HAP-1 (cell line): ENCODE measurements at regions of chr1 and their contacts with region 1.

Region 1: DNA sequence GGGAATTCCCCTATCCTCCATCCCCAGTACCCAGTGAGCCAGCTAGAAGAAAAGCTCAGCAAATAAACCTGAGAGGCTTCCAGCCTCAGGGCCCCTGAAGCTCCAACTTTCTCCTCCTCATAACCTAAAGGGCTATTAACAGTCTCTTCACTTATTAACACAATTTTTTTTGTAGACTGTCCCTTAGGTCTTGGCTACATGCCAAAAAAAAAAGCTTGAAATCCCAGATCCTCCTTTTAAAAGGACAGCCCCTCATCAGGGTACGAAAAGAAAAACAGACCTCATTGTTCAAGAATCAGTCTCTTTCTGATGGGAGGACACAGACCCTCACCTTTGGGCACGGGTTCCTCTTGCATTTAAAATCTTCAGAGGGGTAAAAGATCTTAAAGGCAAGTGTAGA is 72.8 kb upstream of the CD1D start:
- DNase-seq: no peak
- H3K4me3 ChIP-seq: no peak overlapping the region
- H3K4me1 ChIP-seq: peaks cover 47% of the 10 kb centered on the region
- H3K27me3 ChIP-seq: no peaks in the 10 kb centered on the region

Region 2: DNA sequence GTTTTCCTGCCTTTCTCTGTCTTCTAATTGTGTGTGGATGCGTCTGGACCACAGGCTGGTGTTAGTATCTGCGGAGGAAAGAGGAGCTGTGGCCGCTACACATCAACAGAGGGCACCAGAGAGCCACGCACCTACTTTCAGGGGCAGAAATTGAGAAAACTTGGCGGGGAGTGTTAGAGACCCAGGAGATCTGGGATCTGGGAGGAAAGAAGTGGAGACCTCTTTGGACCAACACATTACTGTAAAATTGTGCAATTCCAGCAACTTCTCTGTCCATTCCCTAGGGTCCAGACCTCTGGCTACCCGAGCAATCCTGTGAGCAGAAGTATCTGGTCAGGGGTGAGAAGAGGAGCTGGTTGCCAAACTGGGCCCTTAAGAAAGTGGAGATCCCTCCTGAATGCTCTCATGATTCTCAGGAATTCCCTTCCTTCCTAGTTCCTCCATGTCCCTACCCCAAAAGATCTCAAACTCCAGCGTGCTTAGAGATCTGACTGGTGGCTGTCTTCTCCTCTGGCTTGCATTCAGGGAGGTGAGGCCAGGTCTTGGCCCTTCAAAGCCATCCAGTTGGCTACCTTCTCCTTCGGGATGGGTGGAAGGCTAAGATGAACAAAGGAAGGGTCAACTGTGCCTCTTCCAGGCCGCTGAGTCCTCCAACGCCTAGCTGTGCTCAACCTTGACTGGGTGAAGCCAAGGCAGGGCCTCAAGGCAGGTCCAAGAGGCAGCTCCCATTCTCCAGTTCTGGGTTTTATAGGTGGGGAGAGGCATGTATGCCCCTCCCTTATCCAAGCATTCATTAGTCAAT is 115.7 kb before region 1 on chr1:
- in situ Hi-C with region 1: loop called (anchors 5 kb)
- DNase-seq: peak; percentile 67 to 84
- H3K4me3 ChIP-seq: no peak overlapping the region; the same call in 1 of the 2 replicates
- H3K4me1 ChIP-seq: peaks cover 16% of the 10 kb centered on the region
- H3K27me3 ChIP-seq: no peaks in the 10 kb centered on the region; the same call in 1 of the 2 replicates

Region 3: GRCh38 chr1:158272681-158273080 is 164.8 kb after region 1 on chr1:
- in situ Hi-C with region 1: no loop called
- DNase-seq: no peak
- H3K4me3 ChIP-seq: no peak overlapping the region
- H3K4me1 ChIP-seq: no peaks in the 10 kb centered on the region
- H3K27me3 ChIP-seq: no peaks in the 10 kb centered on the region